ENCODE measurements at regions of chr22 and their contacts with region 1.

Region 1: DNA sequence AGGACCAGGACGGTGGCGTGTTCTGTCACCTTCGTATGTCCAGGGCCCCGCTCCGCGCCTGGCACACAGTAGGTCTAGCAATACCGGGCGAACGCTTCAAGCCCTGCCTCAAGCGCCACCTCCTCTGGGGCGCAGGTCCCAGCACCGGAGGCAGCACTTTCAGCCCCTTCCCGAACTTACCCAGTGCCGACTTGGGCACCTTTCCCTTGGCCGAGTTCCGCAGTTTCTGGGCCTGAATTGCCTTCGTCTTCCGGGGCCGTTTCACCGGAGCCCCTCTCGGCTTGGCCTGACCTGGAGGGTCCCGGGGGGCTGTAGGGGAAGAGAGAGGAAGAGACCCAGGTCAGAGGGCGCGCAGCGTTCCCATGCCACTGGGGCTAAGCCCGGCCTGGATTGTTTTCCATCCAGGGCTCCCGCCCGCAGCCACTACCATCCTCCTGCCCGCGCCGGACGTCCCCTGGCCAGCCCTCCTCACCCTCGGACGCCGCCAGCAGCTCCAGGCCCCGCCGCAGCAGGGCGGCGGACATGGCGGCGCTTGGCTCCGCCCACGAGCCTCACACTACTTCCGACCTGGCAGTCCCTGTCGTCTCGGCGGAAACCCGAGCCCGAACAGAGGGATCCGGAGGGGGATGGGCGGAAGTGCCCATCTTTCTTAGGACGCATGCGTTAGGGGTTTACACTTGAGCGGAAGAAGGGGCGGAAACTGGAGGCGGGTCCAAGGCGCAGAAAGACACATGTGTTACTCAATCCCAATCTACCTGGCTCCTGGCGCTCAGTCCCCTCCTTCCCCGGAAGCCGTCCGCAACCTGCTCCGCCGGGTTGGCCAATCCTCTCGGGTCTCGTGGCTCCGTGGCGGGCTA is at the start of gene RPS19BP1:
- DNase-seq: peak; percentile 100
- H3K4me3 ChIP-seq: peak within 1 kb of the TSS; percentile 97
- H3K27ac ChIP-seq: peak within 1 kb of the TSS; percentile 66
- H3K4me1 ChIP-seq: peaks cover 57% of the 10 kb centered on the region
- CTCF ChIP-seq: no peak
- total RNA-seq, gene RPS19BP1: 148 and 185 TPM in 2 replicates

Region 2: DNA sequence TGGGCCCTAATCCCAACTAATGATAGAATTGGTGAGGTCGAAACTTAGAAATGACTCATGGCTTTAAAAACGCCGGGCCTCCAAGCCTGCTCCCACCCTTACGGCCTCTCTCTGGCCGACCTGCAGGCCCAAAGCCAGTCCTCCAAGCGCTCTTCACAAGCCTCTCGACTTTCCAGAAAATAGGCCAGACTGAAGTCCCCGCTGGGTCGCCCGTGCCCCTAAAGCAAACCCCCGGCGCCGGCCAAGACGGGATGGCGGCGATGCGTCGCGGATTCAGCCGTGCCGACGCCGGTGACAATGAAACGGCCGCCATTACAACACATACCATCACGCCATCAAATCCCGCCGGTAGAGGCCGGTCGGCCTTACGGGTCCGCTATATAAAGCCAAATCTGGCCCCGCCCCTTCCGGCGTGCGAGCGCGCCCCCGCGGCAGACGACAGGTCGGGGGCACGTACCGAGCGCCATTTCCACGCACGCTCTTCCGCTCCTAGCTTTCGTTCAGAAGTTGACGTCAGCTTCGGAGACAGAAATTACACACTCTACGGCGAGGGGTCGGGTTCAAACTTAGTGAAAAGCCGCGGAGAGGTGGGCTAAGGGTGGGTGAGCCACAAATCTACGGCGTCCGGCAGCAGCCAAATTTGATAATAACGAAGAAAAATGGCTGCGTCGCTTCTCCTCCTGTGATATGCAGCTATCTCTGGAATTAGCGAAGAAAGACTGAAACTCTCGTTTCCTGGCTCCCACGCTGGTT is 213.0 kb before region 1 on chr22 and contains the start of gene RPL3:
- CTCF ChIA-PET with region 1: no interaction called
- POLR2A ChIA-PET with region 1: interaction called, 3 read pairs
- intact Hi-C with region 1: loop called (anchors 2 kb)
- DNase-seq: peak; percentile 98
- H3K4me3 ChIP-seq: peak within 1 kb of the TSS; percentile 94
- H3K27ac ChIP-seq: peak within 1 kb of the TSS; percentile 82
- H3K4me1 ChIP-seq: peaks cover 36% of the 10 kb centered on the region
- CTCF ChIP-seq: 0 out of 2 replicates have a peak, but pooled peaks have one; percentile 13
- total RNA-seq, gene RPL3: 2,313 and 2,662 TPM in 2 replicates

Region 3: DNA sequence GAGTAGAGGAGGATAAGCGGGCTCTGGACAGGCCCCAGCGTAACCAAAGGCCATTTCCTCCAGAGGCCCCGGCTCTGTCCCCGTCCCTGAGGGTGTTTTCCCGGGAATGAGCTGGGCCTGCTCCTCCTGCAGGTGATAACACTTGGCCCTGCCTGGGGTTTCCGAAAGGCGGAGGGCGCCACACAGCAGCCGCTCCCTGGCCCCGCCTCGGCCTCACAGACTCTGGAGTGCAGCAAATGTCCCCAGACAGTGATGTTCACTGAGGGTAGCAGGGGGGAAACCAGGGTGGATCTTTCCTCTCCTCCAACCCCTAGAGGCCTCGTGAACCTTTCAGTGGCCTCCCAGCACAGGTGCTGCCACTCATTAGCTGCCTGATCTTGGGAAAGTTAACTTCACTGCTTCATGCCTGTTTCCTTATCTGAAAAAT is 86.1 kb before region 1 on chr22:
- CTCF ChIA-PET with region 1: interaction called, 4 read pairs
- POLR2A ChIA-PET with region 1: interaction called, 4 read pairs
- intact Hi-C with region 1: loop called (anchors 2 kb)
- DNase-seq: peak; percentile 79
- H3K4me3 ChIP-seq: peak overlapping the region; percentile 74
- H3K27ac ChIP-seq: peak overlapping the region; percentile 96
- H3K4me1 ChIP-seq: peaks cover 98% of the 10 kb centered on the region
- CTCF ChIP-seq: peak; percentile 36; the same call in 1 of the 2 replicates

Region 4: DNA sequence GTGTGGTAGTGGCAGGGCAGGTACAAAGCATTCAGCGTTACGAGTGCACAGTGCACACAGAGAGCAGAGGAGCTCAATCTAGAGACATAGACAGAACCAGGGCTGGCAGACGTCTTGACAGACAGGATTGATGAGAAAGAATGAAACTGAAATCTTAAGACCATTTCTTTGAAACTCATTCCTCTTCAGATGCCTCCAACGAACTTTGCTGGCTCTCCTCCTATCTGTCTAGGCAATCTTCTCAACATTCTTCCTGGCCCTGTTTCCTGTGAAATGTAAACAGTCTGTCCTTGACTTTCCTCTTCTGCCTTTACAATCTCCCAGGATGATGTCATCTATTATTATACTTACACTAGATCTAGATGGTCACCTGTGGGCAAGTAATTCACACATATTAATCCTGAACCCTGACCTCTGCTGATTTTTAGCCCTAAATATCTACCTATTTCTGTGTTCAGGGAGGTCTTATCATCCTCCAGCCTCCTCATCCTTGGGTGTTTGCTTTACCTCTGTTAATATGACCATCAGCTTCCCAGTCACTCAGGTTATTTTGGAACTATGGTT is 241.6 kb after region 1 on chr22:
- CTCF ChIA-PET with region 1: no interaction called
- POLR2A ChIA-PET with region 1: no interaction called
- intact Hi-C with region 1: no loop called
- DNase-seq: peak; percentile 1
- H3K4me3 ChIP-seq: no peak overlapping the region
- H3K27ac ChIP-seq: no peak overlapping the region
- H3K4me1 ChIP-seq: no peaks in the 10 kb centered on the region
- CTCF ChIP-seq: no peak

Region 5: DNA sequence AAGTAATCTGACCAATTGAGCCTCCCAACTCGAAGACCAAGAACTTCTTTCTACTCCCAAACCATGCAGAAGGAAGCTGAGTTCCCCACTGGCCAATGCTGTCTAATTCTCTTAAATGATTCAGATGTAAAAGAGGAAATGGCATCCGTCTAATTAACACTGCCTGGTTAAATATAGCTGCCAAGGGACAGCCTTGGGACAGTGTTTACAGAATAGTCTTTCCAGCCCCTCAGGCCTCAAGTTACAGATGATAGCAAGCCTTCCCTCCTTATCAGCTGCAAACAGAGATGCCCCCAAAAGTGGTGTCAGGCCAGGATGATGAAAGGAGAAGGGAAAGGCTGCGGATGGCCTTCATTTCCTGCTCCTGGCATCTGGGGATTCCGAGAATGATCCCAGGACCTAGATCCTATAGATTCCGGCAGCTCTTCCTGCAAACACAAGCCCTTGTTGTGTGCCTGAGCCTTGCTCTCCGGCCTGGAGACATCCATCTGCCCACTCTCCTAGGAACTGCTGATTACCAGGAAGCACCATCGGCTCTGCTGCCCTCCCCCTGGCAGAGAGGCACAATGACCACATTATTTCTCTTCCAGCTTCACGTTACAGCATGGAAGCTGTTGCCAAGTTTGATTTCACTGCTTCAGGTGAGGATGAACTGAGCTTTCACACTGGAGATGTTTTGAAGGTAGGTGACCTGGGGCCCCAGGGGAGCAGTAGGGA is 414.2 kb after region 1 on chr22:
- CTCF ChIA-PET with region 1: no interaction called
- POLR2A ChIA-PET with region 1: no interaction called
- intact Hi-C with region 1: loop called (anchors 10 kb)
- DNase-seq: peak; percentile 34
- H3K4me3 ChIP-seq: peak overlapping the region; percentile 13
- H3K27ac ChIP-seq: peak overlapping the region; percentile 15
- H3K4me1 ChIP-seq: peaks cover 55% of the 10 kb centered on the region
- CTCF ChIP-seq: no peak

Region 6: GRCh38 chr22:40177738-40178416 is 645.4 kb after region 1 on chr22 and contains the start of gene TNRC6B:
- CTCF ChIA-PET with region 1: no interaction called
- POLR2A ChIA-PET with region 1: no interaction called
- intact Hi-C with region 1: loop called (anchors 10 kb)
- DNase-seq: peak; percentile 96
- H3K4me3 ChIP-seq: peak within 1 kb of the TSS; percentile 91
- H3K27ac ChIP-seq: peak within 1 kb of the TSS; percentile 94
- H3K4me1 ChIP-seq: peaks cover 40% of the 10 kb centered on the region
- CTCF ChIP-seq: no peak
- total RNA-seq, gene TNRC6B: 28.4 and 37.0 TPM in 2 replicates

Measured in OCI-LY7 (cell line).